ENCODE measurements at regions of chr2 and their contacts with region 1.

Region 1: DNA sequence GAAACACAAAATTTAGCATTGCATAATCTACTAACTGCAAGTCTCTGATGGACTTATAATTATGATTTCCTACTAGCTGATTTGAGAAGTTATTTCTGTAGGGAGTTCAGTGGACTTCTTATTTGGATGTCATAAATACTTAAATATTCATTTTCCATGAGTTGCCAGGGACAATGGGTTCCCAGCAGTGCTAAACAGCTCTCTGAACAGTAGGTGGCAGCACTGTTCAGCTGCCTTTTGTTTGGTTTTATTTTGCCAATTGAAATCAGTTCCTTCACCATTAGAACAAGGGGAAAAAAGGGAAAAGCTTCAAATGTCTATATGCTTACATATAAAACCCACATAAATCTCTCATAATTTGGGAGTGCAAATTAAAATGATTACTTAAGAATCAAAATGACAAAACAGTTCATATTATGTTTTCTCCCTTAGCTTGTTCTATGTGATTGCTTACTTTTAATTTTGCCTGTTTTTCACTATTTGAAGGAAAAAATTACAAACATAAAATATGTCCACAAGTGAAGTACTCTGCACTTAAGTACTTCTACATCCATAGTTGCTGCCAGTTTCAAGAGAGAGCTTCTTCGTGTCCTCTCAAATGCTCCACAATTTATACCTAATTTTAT is 898.9 kb downstream of the CPS1 start:
- DNase-seq: peak; percentile 63
- H3K4me3 Mint-ChIP-seq: no peak overlapping the region
- H3K27ac Mint-ChIP-seq: no peak overlapping the region
- H3K4me1 Mint-ChIP-seq: no peaks in the 10 kb centered on the region
- H3K27me3 Mint-ChIP-seq: peaks cover 54% of the 10 kb centered on the region
- CTCF ChIP-seq: peak; percentile 80

Region 2: DNA sequence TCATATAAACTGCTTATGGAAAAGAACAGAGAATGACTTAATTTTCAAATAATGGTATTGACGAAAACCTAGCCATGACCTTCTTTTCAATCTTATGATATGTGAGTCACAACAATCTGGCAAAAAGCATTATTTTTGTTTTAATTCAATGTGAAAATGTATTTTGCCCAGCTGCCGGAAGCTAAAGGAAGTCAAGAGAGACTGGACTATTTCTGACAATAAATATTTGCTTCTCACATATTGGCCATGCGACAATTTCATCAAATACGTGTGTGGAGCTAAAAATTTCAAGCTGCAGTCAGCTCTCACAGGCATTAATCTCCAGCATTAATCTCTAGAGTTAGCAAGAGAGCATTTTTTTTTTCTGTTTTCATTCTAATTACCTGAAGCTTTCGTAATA is 17.9 kb before region 1 on chr2:
- CTCF ChIA-PET with region 1: interaction called, 10 read pairs
- POLR2A ChIA-PET with region 1: no interaction called
- intact Hi-C with region 1: no loop called
- DNase-seq: no peak
- H3K4me3 Mint-ChIP-seq: no peak overlapping the region
- H3K27ac Mint-ChIP-seq: no peak overlapping the region
- H3K4me1 Mint-ChIP-seq: no peaks in the 10 kb centered on the region
- H3K27me3 Mint-ChIP-seq: peaks cover 31% of the 10 kb centered on the region
- CTCF ChIP-seq: no peak

Region 3: DNA sequence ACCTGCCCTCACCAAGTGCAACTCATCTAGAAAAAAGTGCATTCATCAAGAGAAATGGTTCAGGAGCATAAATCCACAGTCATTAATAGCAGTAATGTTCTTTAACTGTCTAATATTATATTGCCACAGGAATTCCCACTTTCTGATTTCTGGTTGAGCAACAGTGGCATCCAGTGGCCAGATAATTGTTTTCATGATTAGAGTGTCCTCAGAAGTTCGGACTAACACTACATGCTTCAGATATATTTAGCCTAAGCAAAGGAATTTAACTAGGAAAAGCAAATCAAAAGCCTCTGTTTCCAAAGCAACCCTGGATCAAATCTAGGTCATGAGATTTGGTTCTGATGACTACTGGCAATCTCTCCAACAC is 1093.1 kb after region 1 on chr2:
- CTCF ChIA-PET with region 1: interaction called, 3 read pairs
- POLR2A ChIA-PET with region 1: no interaction called
- intact Hi-C with region 1: loop called (anchors 5 kb)
- DNase-seq: peak; percentile 38
- H3K4me3 Mint-ChIP-seq: no peak overlapping the region
- H3K27ac Mint-ChIP-seq: no peak overlapping the region
- H3K4me1 Mint-ChIP-seq: no peaks in the 10 kb centered on the region
- H3K27me3 Mint-ChIP-seq: peaks cover 55% of the 10 kb centered on the region
- CTCF ChIP-seq: peak; percentile 32